ENCODE measurements at regions of chr4 and their contacts with region 1.

Region 1: DNA sequence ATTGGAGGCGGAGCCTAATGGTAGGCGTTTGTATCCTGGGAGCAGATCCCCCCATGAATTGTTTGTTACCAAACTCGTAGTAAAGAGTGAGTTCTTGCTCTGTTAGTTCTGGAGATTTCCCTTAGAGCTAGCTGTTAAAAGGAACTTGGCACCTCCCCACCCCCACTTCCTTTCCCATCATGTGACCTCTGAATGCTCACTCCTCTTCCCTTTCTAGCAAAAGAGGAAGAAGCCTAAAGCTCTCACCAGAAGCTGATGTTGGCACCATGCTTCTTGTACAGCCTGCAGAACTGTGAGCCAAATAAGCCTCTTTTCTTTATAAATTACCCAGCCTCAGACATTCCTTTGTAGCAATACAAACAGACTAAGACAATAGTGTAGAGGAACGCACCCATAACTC is 13.8 kb upstream of the ATOH1 start:
- DNase-seq: no peak
- H3K4me3 ChIP-seq: no peak overlapping the region
- H3K27ac ChIP-seq: no peak overlapping the region
- H3K4me1 ChIP-seq: no peaks in the 10 kb centered on the region
- H3K27me3 ChIP-seq: no peaks in the 10 kb centered on the region
- CTCF ChIP-seq: no peak

Region 2: DNA sequence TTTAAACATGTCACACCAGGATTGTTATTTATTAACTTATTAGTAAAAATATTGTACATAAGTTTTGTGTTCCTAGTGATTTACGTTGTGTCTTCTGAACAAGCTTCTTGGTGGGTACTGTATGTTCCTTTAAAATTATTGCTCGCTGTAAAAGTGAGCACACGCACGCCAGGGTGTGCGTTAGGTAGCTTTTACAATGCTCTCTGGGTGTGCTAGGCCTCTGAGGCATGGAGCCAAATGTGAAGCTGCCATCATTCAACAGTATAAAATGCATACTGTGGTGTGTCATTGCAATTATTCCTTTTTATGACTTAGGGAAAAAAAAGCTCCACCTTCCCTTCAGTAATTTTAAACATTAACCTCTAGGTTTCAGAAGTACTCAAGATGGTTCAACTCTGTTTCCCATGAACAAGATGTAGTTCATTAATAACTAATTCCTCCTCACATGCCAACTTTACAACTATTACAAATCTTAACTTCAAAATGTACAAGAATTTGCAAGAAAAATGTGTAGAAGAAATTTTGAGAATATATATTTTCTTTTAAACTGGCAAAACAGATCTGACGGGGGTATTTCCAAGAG is 56.2 kb after region 1 on chr4:
- CTCF ChIA-PET with region 1: no interaction called
- dilution Hi-C with region 1: loop called (anchors 5 kb)
- in situ Hi-C with region 1: no loop called
- intact Hi-C with region 1: no loop called
- DNase-seq: no peak
- H3K4me3 ChIP-seq: no peak overlapping the region
- H3K27ac ChIP-seq: no peak overlapping the region
- H3K4me1 ChIP-seq: no peaks in the 10 kb centered on the region
- H3K27me3 ChIP-seq: peaks cover 2% of the 10 kb centered on the region
- CTCF ChIP-seq: no peak

Measured in mammary epithelial cell (primary cell).